BJ (cell line): ENCODE measurements at regions of chr9 and their contacts with region 1.

Region 1: DNA sequence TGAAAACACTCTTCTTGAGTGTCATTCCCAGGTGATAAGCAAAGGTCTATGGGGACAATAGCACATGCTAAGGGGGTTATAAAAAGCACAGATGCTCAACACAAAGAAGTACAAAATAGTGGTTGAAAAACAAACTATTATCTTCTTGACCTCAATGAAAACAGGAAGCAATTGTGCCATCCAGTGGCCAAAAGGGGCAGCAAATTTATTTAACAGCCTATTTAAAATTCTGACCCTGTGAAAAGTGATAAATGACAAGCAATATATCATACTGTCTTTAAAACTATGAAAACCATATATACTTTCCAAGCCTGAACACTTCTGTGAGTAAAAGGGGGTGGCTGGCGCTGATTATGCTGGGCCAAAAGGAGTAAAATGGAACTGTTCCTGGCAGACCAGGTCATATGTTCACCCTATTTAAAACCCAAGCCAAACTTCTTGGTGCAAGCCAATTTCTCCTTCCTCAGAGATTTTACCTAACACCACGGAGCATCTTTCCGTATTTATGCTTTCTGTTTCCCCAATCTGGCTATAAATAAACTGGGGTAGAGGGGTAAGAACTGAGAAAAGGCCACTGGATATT is 29.7 kb downstream of the TEX10 start:
- DNase-seq: no peak
- H3K4me3 ChIP-seq: no peak overlapping the region
- H3K27me3 ChIP-seq: no peaks in the 10 kb centered on the region
- CTCF ChIP-seq: peak; percentile 69

Region 2: GRCh38 chr9:100346836-100347235 is 23.8 kb after region 1 on chr9:
- CTCF ChIA-PET with region 1: interaction called, 10 read pairs
- POLR2A ChIA-PET with region 1: no interaction called
- DNase-seq: peak; percentile 40
- H3K4me3 ChIP-seq: no peak overlapping the region
- H3K27me3 ChIP-seq: no peaks in the 10 kb centered on the region
- CTCF ChIP-seq: no peak